Psoas muscle (tissue), 8 donors: ENCODE measurements at regions of chr11 and their contacts with region 1.

Region 1: DNA sequence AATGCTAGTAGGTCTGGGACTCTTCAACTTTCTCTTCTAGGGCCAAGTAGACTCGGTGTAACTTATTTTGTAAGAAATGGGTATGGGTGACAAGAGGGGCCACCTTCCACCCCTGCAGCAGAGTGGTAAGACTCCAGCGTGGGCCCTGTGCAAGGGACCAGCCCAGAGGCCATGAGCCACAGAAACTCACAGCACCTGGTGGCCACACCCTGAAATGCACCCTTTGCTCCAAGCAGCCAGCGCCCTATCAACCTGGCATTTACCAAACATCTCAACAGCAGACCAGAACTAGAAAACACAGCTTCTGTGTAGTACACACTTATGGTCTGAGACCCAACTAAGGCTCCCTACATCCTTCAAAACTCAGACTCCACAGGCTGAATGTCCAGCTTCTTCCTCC is 5.7 kb downstream of the CDCA5 start:
- DNase-seq: peak in 1 of 2 donors; percentile 39
- ATAC-seq: peak; percentile 34 to 72 (median 58)
- H3K4me3 ChIP-seq: no peak overlapping the region
- H3K27ac ChIP-seq: no peak overlapping the region
- H3K4me1 ChIP-seq: peaks cover 2% of the 10 kb centered on the region
- H3K27me3 ChIP-seq: no peaks in the 10 kb centered on the region
- CTCF ChIP-seq: peak; percentile 40

Region 2: GRCh38 chr11:65019824-65020223 is 58.3 kb before region 1 on chr11:
- intact Hi-C with region 1: loop called in 1 of 2 experiments (anchors 5 kb)
- DNase-seq: no peak
- ATAC-seq: no peak
- H3K4me3 ChIP-seq: no peak overlapping the region
- H3K27ac ChIP-seq: no peak overlapping the region
- H3K4me1 ChIP-seq: no peaks in the 10 kb centered on the region
- H3K27me3 ChIP-seq: no peaks in the 10 kb centered on the region
- CTCF ChIP-seq: no peak

Region 3: GRCh38 chr11:65053827-65054508 is 24.2 kb before region 1 on chr11:
- intact Hi-C with region 1: loop called in 1 of 2 experiments (anchors 1 kb)
- DNase-seq: no peak
- ATAC-seq: no peak
- H3K4me3 ChIP-seq: no peak overlapping the region
- H3K27ac ChIP-seq: no peak overlapping the region
- H3K4me1 ChIP-seq: no peaks in the 10 kb centered on the region
- H3K27me3 ChIP-seq: peaks cover 0 to 2% (median 0%) of the 10 kb centered on the region in 3 donors
- CTCF ChIP-seq: no peak